A673 (cell line): ENCODE measurements at regions of chr6 and their contacts with region 1.

Region 1: DNA sequence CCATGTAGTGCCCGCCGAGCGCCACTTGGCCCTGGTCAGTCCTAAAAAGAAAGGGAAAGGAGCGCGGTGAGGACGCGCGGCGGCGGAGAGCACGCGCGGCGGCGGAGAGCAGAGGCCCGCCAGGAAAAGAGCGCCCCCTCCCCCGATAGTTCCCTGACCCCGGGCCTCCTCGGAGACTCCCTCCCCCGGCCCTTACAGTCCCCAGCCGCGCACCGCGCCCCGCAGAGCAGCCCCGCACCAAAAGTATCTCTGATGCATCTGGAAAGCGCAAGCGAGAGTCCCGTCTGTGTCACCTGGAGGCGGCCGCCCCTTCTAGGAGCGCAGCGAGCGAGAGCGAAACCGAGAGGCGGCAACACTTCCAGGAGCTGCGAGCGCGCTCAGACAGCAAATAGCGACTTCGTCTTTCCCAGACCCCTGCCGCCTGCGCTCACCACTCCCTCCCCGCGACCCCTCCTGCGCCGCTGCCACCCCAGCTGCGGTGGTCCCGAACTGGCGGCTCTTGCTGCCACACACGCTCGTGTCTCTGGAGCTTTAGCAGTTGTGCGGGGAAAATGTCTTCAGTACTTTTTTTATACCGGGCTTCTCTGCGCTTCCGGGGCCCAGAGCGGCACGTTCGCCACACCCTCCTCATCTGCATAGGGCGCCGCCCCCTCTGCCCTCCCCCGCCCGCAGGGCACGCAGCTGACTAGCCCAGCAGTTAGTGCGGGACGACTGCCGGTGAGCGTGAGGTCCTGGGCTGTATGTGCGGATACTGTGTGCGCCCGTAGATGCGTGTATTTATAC is at the start of gene TENT5A:
- DNase-seq: peak; percentile 94
- H3K4me3 ChIP-seq: peak within 1 kb of the TSS; percentile 68
- H3K27ac ChIP-seq: peak within 1 kb of the TSS; percentile 82
- H3K4me1 ChIP-seq: peaks cover 23% of the 10 kb centered on the region
- H3K27me3 ChIP-seq: no peaks in the 10 kb centered on the region
- CTCF ChIP-seq: peak; percentile 46
- total RNA-seq, gene TENT5A: 36.9 and 37.1 TPM in 2 replicates

Region 2: DNA sequence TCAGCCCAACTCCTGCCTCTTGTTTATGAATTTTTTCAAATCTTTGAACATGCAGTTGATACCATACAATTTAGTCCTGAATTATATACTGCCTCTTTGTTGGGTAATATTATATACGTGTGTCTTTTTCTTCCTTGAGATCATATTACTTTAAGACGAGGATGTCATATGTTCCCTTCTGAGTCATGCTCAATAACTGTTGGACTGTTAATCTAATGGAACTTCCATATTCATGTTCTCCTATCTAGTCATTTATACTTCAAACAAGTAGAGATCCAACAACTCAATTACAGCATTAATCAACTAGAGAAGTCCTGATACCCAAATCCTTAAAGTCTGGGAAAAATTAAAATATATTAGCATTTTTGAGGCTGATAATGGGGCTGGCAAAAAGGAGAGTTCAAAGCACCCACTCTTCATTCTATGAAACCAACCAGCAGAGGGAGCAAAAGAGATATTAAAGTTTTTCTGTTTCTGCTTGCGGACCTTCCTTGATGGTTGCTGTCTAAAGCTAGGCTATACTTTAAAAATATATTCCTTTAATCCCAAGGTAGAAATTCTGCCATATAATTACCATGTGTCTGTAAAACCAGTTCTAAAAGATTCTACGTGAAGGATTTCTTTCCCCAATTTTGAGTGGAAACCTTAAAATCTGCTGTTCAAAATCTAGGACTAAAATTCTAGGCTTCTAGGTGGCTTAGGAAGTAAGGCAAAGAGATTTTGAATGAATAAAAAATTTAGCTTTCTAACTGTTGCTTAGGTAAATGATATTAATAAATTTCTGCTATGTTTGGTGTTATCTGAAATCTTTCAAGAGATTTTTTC is 1147.0 kb before region 1 on chr6:
- CTCF ChIA-PET with region 1: interaction called, 3 read pairs
- POLR2A ChIA-PET with region 1: no interaction called
- intact Hi-C with region 1: loop called (anchors 2 kb)
- DNase-seq: peak; percentile 74
- H3K4me3 ChIP-seq: no peak overlapping the region
- H3K27ac ChIP-seq: no peak overlapping the region
- H3K4me1 ChIP-seq: peaks cover 20% of the 10 kb centered on the region
- H3K27me3 ChIP-seq: no peaks in the 10 kb centered on the region
- CTCF ChIP-seq: peak; percentile 79

Region 3: GRCh38 chr6:80991316-80991715 is 761.0 kb before region 1 on chr6:
- CTCF ChIA-PET with region 1: no interaction called
- POLR2A ChIA-PET with region 1: no interaction called
- intact Hi-C with region 1: loop called (anchors 5 kb)
- DNase-seq: peak; percentile 93
- H3K4me3 ChIP-seq: no peak overlapping the region
- H3K27ac ChIP-seq: peak overlapping the region; percentile 47
- H3K4me1 ChIP-seq: peaks cover 28% of the 10 kb centered on the region
- H3K27me3 ChIP-seq: no peaks in the 10 kb centered on the region
- CTCF ChIP-seq: no peak

Region 4: GRCh38 chr6:81084776-81085430 is 667.4 kb before region 1 on chr6:
- CTCF ChIA-PET with region 1: no interaction called
- POLR2A ChIA-PET with region 1: no interaction called
- intact Hi-C with region 1: loop called (anchors 5 kb)
- DNase-seq: no peak
- H3K4me3 ChIP-seq: no peak overlapping the region
- H3K27ac ChIP-seq: no peak overlapping the region
- H3K4me1 ChIP-seq: no peaks in the 10 kb centered on the region
- H3K27me3 ChIP-seq: no peaks in the 10 kb centered on the region
- CTCF ChIP-seq: no peak

Region 5: DNA sequence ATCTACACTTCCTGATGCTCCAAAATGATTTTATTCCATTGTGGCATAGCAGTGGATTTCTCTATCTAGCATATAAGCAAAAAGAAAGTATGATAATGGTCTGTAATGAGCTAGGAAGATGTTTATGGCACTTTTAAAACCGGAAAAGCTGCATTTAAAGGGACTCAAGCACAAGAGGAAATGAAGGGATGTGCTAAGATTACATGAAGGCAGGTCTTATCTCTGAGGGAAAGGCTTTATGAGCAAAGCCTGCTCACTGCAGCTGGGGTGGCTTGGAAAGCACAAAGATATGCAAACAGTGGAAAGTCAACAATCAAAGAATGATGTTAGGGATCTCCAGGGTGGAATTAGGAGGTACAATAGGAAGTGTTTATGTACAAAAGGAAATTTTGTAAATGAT is 138.0 kb before region 1 on chr6:
- CTCF ChIA-PET with region 1: no interaction called
- POLR2A ChIA-PET with region 1: no interaction called
- intact Hi-C with region 1: loop called (anchors 5 kb)
- DNase-seq: peak; percentile 92
- H3K4me3 ChIP-seq: peak overlapping the region; percentile 13
- H3K27ac ChIP-seq: peak overlapping the region; percentile 89
- H3K4me1 ChIP-seq: peaks cover 34% of the 10 kb centered on the region
- H3K27me3 ChIP-seq: no peaks in the 10 kb centered on the region
- CTCF ChIP-seq: no peak

Region 6: GRCh38 chr6:81997091-81997926 is 245.0 kb after region 1 on chr6:
- CTCF ChIA-PET with region 1: no interaction called
- POLR2A ChIA-PET with region 1: no interaction called
- intact Hi-C with region 1: loop called (anchors 5 kb)
- DNase-seq: peak; percentile 87
- H3K4me3 ChIP-seq: no peak overlapping the region
- H3K27ac ChIP-seq: peak overlapping the region; percentile 81
- H3K4me1 ChIP-seq: peaks cover 37% of the 10 kb centered on the region
- H3K27me3 ChIP-seq: no peaks in the 10 kb centered on the region
- CTCF ChIP-seq: no peak